ENCODE measurements at regions of chr21 and their contacts with region 1.

Region 1: DNA sequence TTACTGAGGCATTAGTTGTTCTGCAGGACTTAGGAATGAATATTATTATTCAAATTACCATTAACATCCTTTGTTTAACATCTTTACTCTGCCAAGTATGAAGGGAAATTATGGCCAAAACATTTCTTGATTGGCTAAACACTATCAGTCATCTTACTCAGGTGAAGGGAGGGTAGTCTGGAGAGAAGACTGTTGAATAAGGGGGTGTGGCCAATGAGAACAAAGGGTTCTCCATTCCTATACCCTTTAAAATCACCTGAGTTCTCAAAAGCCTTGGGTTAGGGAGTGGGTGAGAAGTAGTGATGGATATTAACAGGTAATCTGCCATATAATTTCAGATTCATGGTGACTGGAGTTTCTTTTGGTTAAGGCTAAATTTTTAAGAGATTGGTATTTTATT is 19.3 kb downstream of the CRYZL1 start:
- DNase-seq: no peak
- ATAC-seq: no peak
- H3K4me3 ChIP-seq: no peak overlapping the region
- H3K27ac ChIP-seq: no peak overlapping the region
- H3K4me1 ChIP-seq: no peaks in the 10 kb centered on the region
- H3K27me3 ChIP-seq: no peaks in the 10 kb centered on the region
- CTCF ChIP-seq: no peak

Region 2: DNA sequence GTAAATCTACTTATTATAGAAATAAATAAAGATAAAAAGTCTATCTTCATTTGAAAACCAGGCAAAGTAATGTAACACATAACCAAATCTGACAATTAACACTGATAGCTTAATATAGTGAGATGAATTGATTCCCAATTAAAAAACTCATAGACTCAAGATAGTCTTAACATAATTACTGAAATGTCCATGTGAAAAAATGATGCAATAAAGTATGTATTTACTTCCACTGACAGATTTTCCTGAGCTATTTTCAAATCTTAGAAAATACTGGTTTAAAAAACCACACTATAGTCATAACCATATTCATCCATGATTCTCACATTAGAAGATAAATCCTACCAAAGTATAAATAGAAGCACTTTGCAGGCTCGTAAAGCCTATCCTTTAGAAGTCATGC is 24.2 kb before region 1 on chr21:
- CTCF ChIA-PET with region 1: no interaction called
- POLR2A ChIA-PET with region 1: interaction called, 11 read pairs
- intact Hi-C with region 1: no loop called
- DNase-seq: no peak
- ATAC-seq: no peak
- H3K4me3 ChIP-seq: no peak overlapping the region
- H3K27ac ChIP-seq: no peak overlapping the region
- H3K4me1 ChIP-seq: no peaks in the 10 kb centered on the region
- H3K27me3 ChIP-seq: no peaks in the 10 kb centered on the region
- CTCF ChIP-seq: no peak